Ascending aorta (tissue), 2 donors: ENCODE measurements at regions of chr2 and their contacts with region 1.

Region 1: DNA sequence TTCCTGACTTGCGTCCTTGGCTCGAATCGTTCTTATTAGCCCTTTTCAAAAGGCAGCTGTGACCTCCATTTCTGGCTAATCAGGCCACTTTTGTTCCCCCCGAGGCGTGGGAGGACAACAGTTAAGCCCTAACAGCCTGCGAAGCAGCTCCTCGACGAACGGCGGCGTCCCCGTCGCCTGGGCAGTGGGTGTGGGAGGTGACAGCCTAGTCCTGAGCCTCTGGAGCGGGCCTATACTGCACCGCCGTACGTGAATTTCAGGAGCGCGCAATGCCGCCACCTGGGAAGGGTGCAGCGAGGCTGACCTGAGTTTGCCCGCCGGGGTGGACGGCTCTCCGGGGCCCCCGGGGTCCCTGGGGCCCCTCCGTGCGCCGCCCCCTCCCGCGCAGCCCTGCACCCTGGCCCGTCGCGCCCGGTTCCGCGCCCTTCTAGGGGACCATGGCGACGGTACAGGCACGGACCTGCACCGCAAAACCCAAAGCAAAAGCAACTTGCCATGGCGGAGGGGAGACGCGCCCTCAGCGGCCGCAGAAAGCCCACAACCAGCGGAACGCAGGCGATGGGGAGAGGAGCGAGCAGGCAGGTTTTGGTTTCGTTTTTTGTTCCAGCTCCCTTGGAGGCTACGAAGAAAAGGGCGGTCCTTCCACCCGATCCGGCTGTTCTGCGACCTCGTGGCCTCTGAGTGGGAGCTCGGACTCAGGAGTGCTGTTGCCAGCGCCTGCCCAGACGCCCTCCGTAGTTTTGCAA is at the start of gene RBM43:
- DNase-seq: peak; percentile 53 to 93
- H3K4me3 ChIP-seq: peak within 1 kb of the TSS; percentile 75 to 84
- H3K27ac ChIP-seq: peak within 1 kb of the TSS; percentile 87 to 96
- H3K4me1 ChIP-seq: peaks cover 0 to 13% of the 10 kb centered on the region in 2 donors
- H3K27me3 ChIP-seq: no peaks in the 10 kb centered on the region
- CTCF ChIP-seq: peak in 1 of 3 experiments; percentile 7
- total RNA-seq, gene RBM43: 0.96 TPM

Region 2: GRCh38 chr2:149330126-149331022 is 1931.0 kb before region 1 on chr2 and contains the start of gene LYPD6:
- intact Hi-C with region 1: loop called (anchors 10 kb)
- DNase-seq: peak in 1 of 2 donors; percentile 76
- H3K4me3 ChIP-seq: peak within 1 kb of the TSS; percentile 68 to 82
- H3K27ac ChIP-seq: peak within 1 kb of the TSS in 1 of 2 donors; percentile 19
- H3K4me1 ChIP-seq: peaks cover 0 to 12% of the 10 kb centered on the region in 2 donors
- H3K27me3 ChIP-seq: no peaks in the 10 kb centered on the region
- CTCF ChIP-seq: no peak
- total RNA-seq, gene LYPD6: 1.8 TPM

Region 3: DNA sequence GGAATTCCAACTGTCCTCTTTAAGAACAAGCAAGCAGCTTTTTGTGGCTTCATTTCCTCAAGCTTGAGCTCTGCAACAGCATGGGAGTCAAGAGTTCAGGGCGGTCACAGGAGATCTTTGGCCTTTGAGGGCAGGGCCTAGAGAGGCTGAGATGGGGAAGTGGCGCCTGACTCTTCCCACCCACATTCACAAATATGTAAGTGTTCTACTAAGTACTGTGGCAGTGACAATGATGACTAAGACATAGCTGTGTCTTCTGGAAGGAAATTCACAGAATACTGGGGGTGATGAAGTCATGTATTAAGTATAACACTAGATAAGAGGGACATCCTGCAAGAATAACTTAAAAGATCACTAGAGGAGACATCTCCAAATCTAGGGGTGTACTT is 788.9 kb before region 1 on chr2:
- intact Hi-C with region 1: loop called (anchors 10 kb)
- DNase-seq: peak; percentile 19 to 78
- H3K4me3 ChIP-seq: no peak overlapping the region
- H3K27ac ChIP-seq: peak overlapping the region; percentile 41 to 48
- H3K4me1 ChIP-seq: peaks cover 0 to 21% of the 10 kb centered on the region in 2 donors
- H3K27me3 ChIP-seq: no peaks in the 10 kb centered on the region
- CTCF ChIP-seq: no peak

Region 4: GRCh38 chr2:151289369-151290088 is 28.1 kb after region 1 on chr2 and contains the start of gene NMI:
- intact Hi-C with region 1: loop called (anchors 1 kb)
- DNase-seq: peak; percentile 19 to 84
- H3K4me3 ChIP-seq: peak within 1 kb of the TSS; percentile 73 to 74
- H3K27ac ChIP-seq: peak within 1 kb of the TSS; percentile 89 to 93
- H3K4me1 ChIP-seq: no peaks in the 10 kb centered on the region
- H3K27me3 ChIP-seq: no peaks in the 10 kb centered on the region
- CTCF ChIP-seq: no peak
- total RNA-seq, gene NMI: 9.9 TPM

Region 5: DNA sequence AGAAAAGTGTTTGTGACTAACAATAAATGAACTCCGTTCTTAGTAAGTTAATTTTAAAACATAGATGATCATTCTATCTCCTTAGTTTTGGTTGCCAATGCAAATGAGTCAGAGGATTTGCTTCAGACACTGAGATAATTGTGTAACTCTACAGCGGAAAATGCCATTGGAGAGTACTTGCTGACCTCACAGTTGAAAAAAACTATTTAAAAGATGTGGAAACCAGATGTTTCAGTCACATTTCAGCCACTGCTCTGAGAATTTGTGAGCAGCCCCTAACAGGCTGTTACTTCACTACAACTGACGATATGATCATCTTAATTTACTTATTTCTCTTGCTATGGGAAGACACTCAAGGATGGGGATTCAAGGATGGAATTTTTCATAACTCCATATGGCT is 96.0 kb after region 1 on chr2 and contains the start of gene TNFAIP6:
- intact Hi-C with region 1: no loop called
- DNase-seq: no peak
- H3K4me3 ChIP-seq: no peak within 1 kb of the TSS
- H3K27ac ChIP-seq: no peak within 1 kb of the TSS
- H3K4me1 ChIP-seq: no peaks in the 10 kb centered on the region
- H3K27me3 ChIP-seq: no peaks in the 10 kb centered on the region
- CTCF ChIP-seq: no peak
- total RNA-seq, gene TNFAIP6: 13.6 TPM

Region 6: DNA sequence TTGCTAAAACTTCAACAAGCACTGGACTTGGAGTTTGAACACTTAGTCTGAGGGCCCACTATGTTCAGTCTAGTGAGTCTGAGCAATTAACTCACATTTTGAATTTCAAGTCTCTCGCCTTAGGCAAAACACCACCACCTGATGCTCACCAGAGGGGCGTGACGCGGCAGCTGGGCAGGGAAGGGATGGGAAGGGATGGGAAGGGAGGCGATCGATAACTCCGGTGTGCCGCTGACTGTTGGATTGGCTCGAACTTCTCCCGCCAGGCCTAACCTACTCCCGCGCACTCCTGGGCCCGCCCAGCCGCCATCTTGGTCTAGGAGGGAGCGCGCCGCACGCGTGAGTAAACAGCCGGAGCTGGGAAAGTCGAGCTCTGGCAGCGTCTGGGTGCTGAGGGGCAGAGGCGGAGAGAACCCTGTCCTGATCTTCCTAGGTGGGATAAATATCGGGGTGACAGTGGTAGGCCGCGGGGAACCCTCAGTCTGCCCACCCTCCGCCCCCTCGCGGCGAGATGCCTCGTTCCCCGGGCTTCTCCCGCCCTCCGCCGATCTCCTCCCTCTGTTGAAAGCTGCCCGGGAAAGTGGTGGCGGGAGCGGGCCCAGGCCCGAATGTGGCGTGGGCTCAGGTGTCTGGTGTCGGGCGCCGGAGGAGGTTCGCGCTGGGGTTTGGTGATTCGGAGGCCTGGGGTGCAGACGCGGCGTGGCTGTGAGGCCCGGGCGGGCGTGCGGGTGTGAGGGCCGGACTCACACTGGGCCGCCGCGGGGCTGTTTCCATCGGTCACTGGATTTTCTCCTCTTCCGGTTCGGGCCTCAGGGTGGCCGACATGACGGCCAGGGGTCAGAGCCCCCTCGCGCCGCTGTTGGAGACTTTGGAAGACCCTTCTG is 148.4 kb after region 1 on chr2 and contains the start of gene RIF1:
- intact Hi-C with region 1: loop called (anchors 1 kb)
- DNase-seq: peak; percentile 47 to 93
- H3K4me3 ChIP-seq: peak within 1 kb of the TSS; percentile 78 to 81
- H3K27ac ChIP-seq: peak within 1 kb of the TSS; percentile 85 to 91
- H3K4me1 ChIP-seq: peaks cover 0 to 10% of the 10 kb centered on the region in 2 donors
- H3K27me3 ChIP-seq: no peaks in the 10 kb centered on the region
- CTCF ChIP-seq: peak; percentile 54 to 81 (median 55)
- total RNA-seq, gene RIF1: 10.7 TPM